ENCODE measurements at regions of chr11 and their contacts with region 1.

Region 1: GRCh38 chr11:2693271-2694261 is 6.2 kb downstream of the KCNQ1OT1 start:
- H3K4me3 ChIP-seq: no peak overlapping the region
- H3K27ac ChIP-seq: no peak overlapping the region
- H3K4me1 ChIP-seq: no peaks in the 10 kb centered on the region; the same call in 1 of the 2 replicates
- CTCF ChIP-seq: no peak

Region 2: GRCh38 chr11:2655834-2656622 is 37.5 kb before region 1 on chr11:
- CTCF ChIA-PET with region 1: no interaction called
- POLR2A ChIA-PET with region 1: no interaction called
- H3K4me3 ChIP-seq: no peak overlapping the region
- H3K27ac ChIP-seq: no peak overlapping the region
- H3K4me1 ChIP-seq: no peaks in the 10 kb centered on the region
- CTCF ChIP-seq: no peak

Region 3: GRCh38 chr11:2708151-2708581 is 14.6 kb after region 1 on chr11:
- CTCF ChIA-PET with region 1: no interaction called
- POLR2A ChIA-PET with region 1: no interaction called
- H3K4me3 ChIP-seq: no peak overlapping the region
- H3K27ac ChIP-seq: no peak overlapping the region
- H3K4me1 ChIP-seq: no peaks in the 10 kb centered on the region
- CTCF ChIP-seq: no peak

Region 4: GRCh38 chr11:2885676-2886081 is 192.1 kb after region 1 on chr11 and contains the start of gene CDKN1C:
- CTCF ChIA-PET with region 1: interaction called, 10 read pairs
- POLR2A ChIA-PET with region 1: no interaction called
- H3K4me3 ChIP-seq: peak within 1 kb of the TSS; percentile 47
- H3K27ac ChIP-seq: no peak within 1 kb of the TSS
- H3K4me1 ChIP-seq: no peaks in the 10 kb centered on the region
- CTCF ChIP-seq: no peak

Measured in HEK293 (cell line).